ENCODE measurements at regions of chr10 and their contacts with region 1.

Region 1: DNA sequence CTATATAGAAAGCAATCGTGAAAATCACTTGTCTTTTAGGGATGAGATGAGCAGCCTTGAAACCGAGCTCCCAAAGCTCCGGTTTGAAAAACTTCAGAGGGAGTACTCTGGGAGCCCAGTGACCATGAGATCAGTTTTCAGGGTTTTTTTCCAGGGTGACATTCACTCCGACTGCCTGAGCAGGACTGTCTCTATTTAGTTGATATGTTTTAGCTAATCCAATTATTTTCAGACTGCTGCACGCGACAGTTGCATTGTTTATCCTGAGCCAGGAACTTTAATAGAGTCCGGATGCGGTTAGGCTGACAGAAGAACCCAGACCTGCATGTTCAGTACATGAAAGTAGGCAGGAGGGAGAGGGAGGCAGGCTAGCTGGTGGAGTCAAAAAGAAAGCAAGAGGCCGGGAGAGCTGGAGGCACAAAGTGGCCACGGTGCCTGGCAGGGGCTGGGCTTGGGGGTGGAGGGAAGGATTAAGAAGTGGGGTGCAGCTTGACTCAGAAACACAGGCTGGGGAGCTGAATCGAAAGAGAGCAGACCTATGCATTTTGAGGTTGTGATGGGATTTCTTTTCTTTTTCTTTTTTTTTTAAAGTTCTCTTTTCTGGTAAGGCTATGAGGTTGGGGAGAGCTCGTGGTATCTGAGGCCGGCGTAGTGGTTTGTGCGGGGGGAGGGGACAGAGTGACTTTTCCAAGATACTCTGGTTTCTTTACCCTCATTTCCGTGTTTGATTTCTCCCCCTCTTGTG is 5.6 kb downstream of the GATA3 start:
- DNase-seq: peak in 7 of 9 experiments; percentile 43 to 83 (median 66)
- ATAC-seq: peak; percentile 30
- H3K4me3 ChIP-seq: peak overlapping the region; percentile 40 to 42
- H3K4me3 Mint-ChIP-seq: peak overlapping the region; percentile 89
- H3K27ac ChIP-seq: peak overlapping the region; percentile 50 to 78
- H3K27ac Mint-ChIP-seq: peak overlapping the region; percentile 93
- H3K4me1 ChIP-seq: peaks cover 64% of the 10 kb centered on the region
- H3K4me1 Mint-ChIP-seq: peaks cover 80% of the 10 kb centered on the region
- H3K27me3 ChIP-seq: no peaks in the 10 kb centered on the region
- H3K27me3 Mint-ChIP-seq: no peaks in the 10 kb centered on the region
- CTCF ChIP-seq: no peak

Region 2: GRCh38 chr10:6721480-6721879 is 1338.7 kb before region 1 on chr10:
- CTCF ChIA-PET with region 1: no interaction called
- POLR2A ChIA-PET with region 1: no interaction called
- intact Hi-C with region 1: no loop called
- DNase-seq: no peak
- ATAC-seq: no peak
- H3K4me3 ChIP-seq: no peak overlapping the region
- H3K4me3 Mint-ChIP-seq: no peak overlapping the region
- H3K27ac ChIP-seq: no peak overlapping the region
- H3K27ac Mint-ChIP-seq: no peak overlapping the region
- H3K4me1 ChIP-seq: no peaks in the 10 kb centered on the region
- H3K4me1 Mint-ChIP-seq: no peaks in the 10 kb centered on the region
- H3K27me3 ChIP-seq: peaks cover 4 to 7% of the 10 kb centered on the region in 2 experiments
- H3K27me3 Mint-ChIP-seq: peaks cover 41% of the 10 kb centered on the region
- CTCF ChIP-seq: no peak

Region 3: GRCh38 chr10:7901256-7901655 is 158.9 kb before region 1 on chr10:
- CTCF ChIA-PET with region 1: no interaction called
- POLR2A ChIA-PET with region 1: no interaction called
- intact Hi-C with region 1: no loop called
- DNase-seq: no peak
- ATAC-seq: no peak
- H3K4me3 ChIP-seq: no peak overlapping the region
- H3K4me3 Mint-ChIP-seq: no peak overlapping the region
- H3K27ac ChIP-seq: no peak overlapping the region
- H3K27ac Mint-ChIP-seq: no peak overlapping the region
- H3K4me1 ChIP-seq: no peaks in the 10 kb centered on the region
- H3K4me1 Mint-ChIP-seq: peaks cover 42% of the 10 kb centered on the region
- H3K27me3 ChIP-seq: no peaks in the 10 kb centered on the region
- H3K27me3 Mint-ChIP-seq: no peaks in the 10 kb centered on the region
- CTCF ChIP-seq: no peak

Region 4: DNA sequence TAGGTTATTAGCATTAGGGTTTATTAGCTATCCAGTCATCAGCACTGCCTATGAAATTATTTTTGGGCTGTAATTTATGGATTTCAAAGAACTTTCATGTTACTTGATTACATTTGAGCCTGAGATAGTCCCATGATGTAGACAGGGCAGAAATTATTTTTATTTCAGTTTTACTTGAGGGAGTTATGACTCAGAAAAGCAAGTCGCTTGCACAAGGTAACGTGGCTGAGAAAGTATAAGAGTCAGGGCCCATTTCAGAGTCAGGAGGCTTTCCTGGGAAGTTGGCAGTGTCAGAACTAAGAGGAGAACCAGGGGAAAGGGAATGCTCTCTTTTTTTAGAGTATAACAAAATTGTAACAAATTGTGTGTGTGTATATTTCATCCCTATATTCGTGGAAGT is 10.9 kb after region 1 on chr10:
- CTCF ChIA-PET with region 1: interaction called, 12 read pairs
- POLR2A ChIA-PET with region 1: interaction called, 5 read pairs
- intact Hi-C with region 1: no loop called
- DNase-seq: no peak
- ATAC-seq: no peak
- H3K4me3 ChIP-seq: no peak overlapping the region
- H3K4me3 Mint-ChIP-seq: no peak overlapping the region
- H3K27ac ChIP-seq: no peak overlapping the region
- H3K27ac Mint-ChIP-seq: no peak overlapping the region
- H3K4me1 ChIP-seq: peaks cover 5% of the 10 kb centered on the region
- H3K4me1 Mint-ChIP-seq: peaks cover 47% of the 10 kb centered on the region
- H3K27me3 ChIP-seq: no peaks in the 10 kb centered on the region
- H3K27me3 Mint-ChIP-seq: no peaks in the 10 kb centered on the region
- CTCF ChIP-seq: no peak

Region 5: DNA sequence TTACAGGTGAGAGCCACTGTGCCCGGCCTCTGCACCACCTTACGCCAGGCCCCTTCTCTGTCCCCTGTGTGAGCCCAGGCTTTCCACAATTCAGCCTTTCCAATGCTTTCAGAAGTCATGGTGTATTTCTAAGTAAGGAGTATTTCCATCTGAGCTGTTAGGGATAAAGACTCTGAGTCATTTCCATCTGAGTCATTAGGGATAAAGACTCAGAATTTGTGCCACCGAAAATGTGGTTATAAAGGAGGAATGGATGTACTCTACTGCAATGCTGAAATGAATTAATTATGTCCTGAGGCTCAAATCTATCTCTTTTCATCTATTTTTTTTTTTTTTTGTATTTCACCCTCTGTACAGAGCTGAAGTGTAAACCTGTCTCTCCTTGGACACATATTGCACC is 78.3 kb after region 1 on chr10:
- CTCF ChIA-PET with region 1: no interaction called
- POLR2A ChIA-PET with region 1: no interaction called
- intact Hi-C with region 1: loop called in 1 of 2 experiments (anchors 5 kb)
- DNase-seq: no peak
- ATAC-seq: no peak
- H3K4me3 ChIP-seq: no peak overlapping the region
- H3K4me3 Mint-ChIP-seq: peak overlapping the region; percentile 58
- H3K27ac ChIP-seq: no peak overlapping the region
- H3K27ac Mint-ChIP-seq: no peak overlapping the region
- H3K4me1 ChIP-seq: peaks cover 11% of the 10 kb centered on the region
- H3K4me1 Mint-ChIP-seq: peaks cover 21% of the 10 kb centered on the region
- H3K27me3 ChIP-seq: no peaks in the 10 kb centered on the region
- H3K27me3 Mint-ChIP-seq: peaks cover 5% of the 10 kb centered on the region
- CTCF ChIP-seq: no peak

Region 6: DNA sequence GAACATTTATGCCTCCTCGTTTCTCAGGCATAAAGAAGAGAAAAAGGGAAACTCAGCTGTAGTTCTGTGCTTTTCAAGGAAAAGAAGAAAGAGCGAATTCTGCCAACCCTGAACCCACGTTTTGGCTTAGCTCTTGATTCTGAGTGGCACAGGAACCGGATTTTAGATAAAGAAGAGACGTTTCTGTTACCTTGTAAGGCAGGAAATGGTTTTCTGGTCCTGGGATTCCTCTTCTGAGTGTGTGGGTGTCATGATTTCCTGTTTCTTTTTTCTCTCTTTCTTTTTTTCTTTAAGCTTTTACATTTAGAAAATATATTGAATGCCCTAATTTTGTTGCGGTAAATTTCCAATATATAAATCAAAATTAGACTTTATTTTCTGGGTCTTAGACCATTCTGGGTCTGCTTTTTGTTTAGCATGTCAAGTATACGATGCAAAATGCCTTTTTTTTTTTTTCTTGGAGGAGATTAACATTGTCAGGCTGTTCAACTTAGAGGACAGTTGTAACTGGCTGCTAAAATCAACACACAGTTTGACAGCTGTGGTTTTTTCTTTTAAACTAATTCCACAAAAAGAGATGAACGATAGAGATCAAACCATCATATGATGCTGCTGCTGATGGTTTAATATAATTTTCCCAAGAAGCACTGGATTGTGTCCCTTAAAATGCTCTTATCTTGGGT is 185.1 kb after region 1 on chr10:
- CTCF ChIA-PET with region 1: no interaction called
- POLR2A ChIA-PET with region 1: interaction called, 6 read pairs
- intact Hi-C with region 1: loop called in 1 of 2 experiments (anchors 5 kb)
- DNase-seq: peak in 2 of 9 experiments; percentile 57 to 77
- ATAC-seq: peak; percentile 88
- H3K4me3 ChIP-seq: peak overlapping the region; percentile 3 to 18
- H3K4me3 Mint-ChIP-seq: peak overlapping the region; percentile 67
- H3K27ac ChIP-seq: peak overlapping the region in 1 of 2 experiments; percentile 74
- H3K27ac Mint-ChIP-seq: peak overlapping the region; percentile 81
- H3K4me1 ChIP-seq: peaks cover 29% of the 10 kb centered on the region
- H3K4me1 Mint-ChIP-seq: peaks cover 42% of the 10 kb centered on the region
- H3K27me3 ChIP-seq: no peaks in the 10 kb centered on the region
- H3K27me3 Mint-ChIP-seq: no peaks in the 10 kb centered on the region
- CTCF ChIP-seq: no peak

Region 7: DNA sequence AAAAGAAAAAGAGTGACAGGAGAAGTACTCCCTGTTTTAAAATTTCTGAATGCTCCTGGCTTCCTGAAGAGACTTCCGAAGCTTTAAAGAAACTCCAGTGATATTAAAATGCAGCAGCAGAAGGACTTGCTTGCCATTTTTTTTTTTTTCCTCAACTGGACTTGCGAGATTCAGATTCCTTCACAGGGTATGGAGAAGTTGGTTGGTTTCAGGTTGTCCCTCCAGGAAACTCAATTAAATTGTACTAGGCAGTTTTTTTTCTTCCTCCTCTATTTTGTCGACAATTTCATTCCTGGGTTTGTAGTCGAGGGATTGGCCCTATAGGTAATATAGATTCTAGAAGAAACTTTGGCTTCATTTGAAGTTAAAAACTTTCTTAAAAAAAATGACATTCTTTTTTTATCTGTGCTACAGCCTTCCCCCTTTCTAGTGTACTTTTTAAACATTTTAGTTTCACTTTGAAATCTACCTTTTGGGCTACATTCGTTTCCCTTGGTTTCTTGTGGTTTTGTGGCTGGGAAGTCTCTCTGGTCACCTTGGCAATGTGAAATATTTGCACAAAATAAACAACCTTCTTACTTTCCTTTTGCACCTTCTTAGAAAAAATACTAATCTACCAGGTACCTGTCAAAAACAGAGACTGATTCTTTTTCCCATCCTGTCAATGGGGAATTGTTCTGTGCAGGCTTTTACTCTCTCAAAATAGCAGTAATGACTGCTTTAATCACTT is 344.4 kb after region 1 on chr10:
- CTCF ChIA-PET with region 1: interaction called, 3 read pairs
- POLR2A ChIA-PET with region 1: interaction called, 3 read pairs
- intact Hi-C with region 1: loop called (anchors 2 to 5 kb)
- DNase-seq: peak in 6 of 9 experiments; percentile 31 to 93 (median 48)
- ATAC-seq: peak; percentile 71
- H3K4me3 ChIP-seq: peak overlapping the region; percentile 14 to 41
- H3K4me3 Mint-ChIP-seq: peak overlapping the region; percentile 74
- H3K27ac ChIP-seq: peak overlapping the region; percentile 66 to 83
- H3K27ac Mint-ChIP-seq: peak overlapping the region; percentile 90
- H3K4me1 ChIP-seq: peaks cover 43% of the 10 kb centered on the region
- H3K4me1 Mint-ChIP-seq: peaks cover 67% of the 10 kb centered on the region
- H3K27me3 ChIP-seq: no peaks in the 10 kb centered on the region
- H3K27me3 Mint-ChIP-seq: no peaks in the 10 kb centered on the region
- CTCF ChIP-seq: no peak

Region 8: GRCh38 chr10:8444630-8445029 is 384.5 kb after region 1 on chr10:
- CTCF ChIA-PET with region 1: interaction called, 16 read pairs
- POLR2A ChIA-PET with region 1: interaction called, 5 read pairs
- intact Hi-C with region 1: loop called in 1 of 2 experiments (anchors 5 kb)
- DNase-seq: peak; percentile 9 to 82 (median 65)
- ATAC-seq: peak; percentile 100
- H3K4me3 ChIP-seq: no peak overlapping the region
- H3K4me3 Mint-ChIP-seq: no peak overlapping the region
- H3K27ac ChIP-seq: no peak overlapping the region
- H3K27ac Mint-ChIP-seq: no peak overlapping the region
- H3K4me1 ChIP-seq: peaks cover 6% of the 10 kb centered on the region
- H3K4me1 Mint-ChIP-seq: peaks cover 10% of the 10 kb centered on the region
- H3K27me3 ChIP-seq: no peaks in the 10 kb centered on the region
- H3K27me3 Mint-ChIP-seq: peaks cover 4% of the 10 kb centered on the region
- CTCF ChIP-seq: no peak